Activated CD4-positive, alpha-beta T cell treated with anti-CD3 and anti-CD28 coated beads, Interleukin-2, amount 10 ng/mL, durations not matched to agents 7 days and 5 days (primary cell): ENCODE measurements at regions of chr12 and their contacts with region 1.

Region 1: GRCh38 chr12:6461401-6462233 is 8.9 kb downstream of the VAMP1 start:
- DNase-seq: peak; percentile 91
- H3K4me3 Mint-ChIP-seq: peak overlapping the region; percentile 76
- H3K27ac Mint-ChIP-seq: peak overlapping the region; percentile 96
- H3K4me1 Mint-ChIP-seq: peaks cover 85% of the 10 kb centered on the region
- H3K27me3 Mint-ChIP-seq: no peaks in the 10 kb centered on the region

Region 2: DNA sequence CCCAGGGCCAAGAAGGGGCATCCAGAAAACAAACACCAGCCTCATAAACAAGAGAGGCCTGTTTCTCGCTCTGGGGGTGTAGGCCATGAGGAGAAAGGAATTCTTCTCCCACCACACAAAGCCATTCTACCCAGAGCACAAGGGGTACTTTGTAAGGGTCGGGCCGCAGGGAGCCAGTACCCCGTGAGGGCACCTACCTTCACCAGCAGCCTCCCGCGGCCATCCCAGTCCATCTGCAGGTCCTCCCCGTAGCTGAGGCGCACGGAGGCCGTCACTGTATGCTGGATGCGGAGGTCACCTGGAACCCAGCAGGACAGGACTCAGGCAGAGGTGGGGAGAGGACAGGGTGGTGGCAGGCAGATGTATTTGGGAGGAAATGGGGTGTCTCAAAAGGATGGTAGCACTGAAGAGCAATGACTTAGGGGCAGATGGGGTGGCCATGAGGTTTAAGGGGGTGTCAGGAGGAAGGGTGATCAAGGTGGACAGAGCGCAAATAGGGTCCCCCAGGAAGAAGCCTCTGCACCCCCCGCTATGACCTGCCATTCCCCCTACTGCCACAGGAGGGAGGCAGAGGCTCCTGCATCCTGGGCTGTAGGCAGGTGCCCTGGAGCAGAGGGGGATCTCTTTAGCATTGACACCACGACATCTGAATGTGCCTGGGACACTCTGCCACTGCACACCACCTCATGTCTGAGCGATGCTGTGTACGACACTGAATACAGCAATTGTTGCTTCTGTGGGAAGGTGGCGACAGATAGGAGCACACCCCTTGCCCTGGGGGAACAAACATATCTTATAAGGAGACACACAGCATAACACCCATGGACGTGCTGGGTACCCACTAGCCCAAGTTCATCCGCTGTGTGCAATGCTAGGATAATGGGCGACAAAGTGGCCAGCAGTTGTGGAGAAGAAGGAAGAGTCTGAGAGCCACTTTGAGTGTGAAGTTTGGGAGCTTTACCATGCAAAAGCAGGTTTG is 398.6 kb before region 1 on chr12:
- CTCF ChIA-PET with region 1: no interaction called
- POLR2A ChIA-PET with region 1: no interaction called
- DNase-seq: peak; percentile 62
- H3K4me3 Mint-ChIP-seq: no peak overlapping the region
- H3K27ac Mint-ChIP-seq: no peak overlapping the region
- H3K4me1 Mint-ChIP-seq: no peaks in the 10 kb centered on the region
- H3K27me3 Mint-ChIP-seq: peaks cover 4% of the 10 kb centered on the region

Region 3: GRCh38 chr12:6443361-6443983 is 18.1 kb before region 1 on chr12:
- CTCF ChIA-PET with region 1: interaction called, 31 read pairs
- POLR2A ChIA-PET with region 1: interaction called, 4 read pairs
- DNase-seq: no peak
- H3K4me3 Mint-ChIP-seq: peak overlapping the region; percentile 90
- H3K27ac Mint-ChIP-seq: peak overlapping the region; percentile 89
- H3K4me1 Mint-ChIP-seq: peaks cover 54% of the 10 kb centered on the region
- H3K27me3 Mint-ChIP-seq: no peaks in the 10 kb centered on the region

Region 4: GRCh38 chr12:6451348-6452244 is 10.0 kb before region 1 on chr12 and contains the start of gene TAPBPL:
- CTCF ChIA-PET with region 1: interaction called, 31 read pairs
- POLR2A ChIA-PET with region 1: interaction called, 25 read pairs
- DNase-seq: peak; percentile 88
- H3K4me3 Mint-ChIP-seq: peak within 1 kb of the TSS; percentile 100
- H3K27ac Mint-ChIP-seq: peak within 1 kb of the TSS; percentile 98
- H3K4me1 Mint-ChIP-seq: peaks cover 71% of the 10 kb centered on the region
- H3K27me3 Mint-ChIP-seq: no peaks in the 10 kb centered on the region
- total RNA-seq, gene TAPBPL: 45.8 to 47.9 TPM